Activated CD4-positive, alpha-beta memory T cell treated with anti-CD3 and anti-CD28 coated beads for 36 hours (primary cell): ENCODE measurements at regions of chr10 and their contacts with region 1.

Region 1: GRCh38 chr10:88064608-88065382 is 201.4 kb downstream of the PTEN start:
- DNase-seq: peak; percentile 51
- H3K4me3 Mint-ChIP-seq: no peak overlapping the region
- H3K27ac Mint-ChIP-seq: peak overlapping the region; percentile 9
- H3K4me1 Mint-ChIP-seq: peaks cover 49% of the 10 kb centered on the region
- H3K27me3 Mint-ChIP-seq: peaks cover 14% of the 10 kb centered on the region

Region 2: GRCh38 chr10:88114368-88114767 is 49.6 kb after region 1 on chr10:
- CTCF ChIA-PET with region 1: interaction called, 3 read pairs
- POLR2A ChIA-PET with region 1: interaction called, 5 read pairs
- intact Hi-C with region 1: loop called (anchors 1 kb)
- DNase-seq: peak; percentile 25
- H3K4me3 Mint-ChIP-seq: no peak overlapping the region
- H3K27ac Mint-ChIP-seq: no peak overlapping the region
- H3K4me1 Mint-ChIP-seq: peaks cover 6% of the 10 kb centered on the region
- H3K27me3 Mint-ChIP-seq: peaks cover 2% of the 10 kb centered on the region

Region 3: DNA sequence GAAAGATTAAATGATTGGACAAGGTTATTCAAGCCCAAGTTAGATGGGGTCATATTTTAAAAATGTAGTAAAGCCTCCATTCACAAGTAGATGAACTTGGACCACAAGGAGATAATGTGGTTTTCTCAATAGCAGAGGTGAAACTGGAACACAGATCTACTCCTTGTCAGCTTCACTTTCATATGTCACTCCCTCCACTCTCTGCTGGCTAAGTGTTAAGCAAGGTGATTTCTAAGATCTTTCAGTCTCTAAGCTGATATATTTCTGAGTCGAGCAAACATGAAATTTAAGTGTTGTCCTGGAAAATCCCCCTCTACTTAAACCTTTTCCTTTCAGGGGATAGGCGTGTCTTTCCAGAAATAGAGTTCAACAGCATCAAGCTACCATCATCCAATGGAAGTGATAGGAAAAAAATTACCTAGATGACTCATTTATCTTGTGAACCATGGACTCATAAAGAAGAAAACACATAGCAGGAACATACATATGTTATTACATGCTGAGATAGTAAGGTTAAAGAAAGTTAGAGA is 73.6 kb after region 1 on chr10:
- CTCF ChIA-PET with region 1: no interaction called
- POLR2A ChIA-PET with region 1: no interaction called
- intact Hi-C with region 1: loop called (anchors 1 kb)
- DNase-seq: no peak
- H3K4me3 Mint-ChIP-seq: no peak overlapping the region
- H3K27ac Mint-ChIP-seq: no peak overlapping the region
- H3K4me1 Mint-ChIP-seq: peaks cover 9% of the 10 kb centered on the region
- H3K27me3 Mint-ChIP-seq: no peaks in the 10 kb centered on the region

Region 4: GRCh38 chr10:88181902-88182600 is 117.3 kb after region 1 on chr10:
- CTCF ChIA-PET with region 1: no interaction called
- POLR2A ChIA-PET with region 1: no interaction called
- intact Hi-C with region 1: no loop called
- DNase-seq: no peak
- H3K4me3 Mint-ChIP-seq: no peak overlapping the region
- H3K27ac Mint-ChIP-seq: no peak overlapping the region
- H3K4me1 Mint-ChIP-seq: peaks cover 11% of the 10 kb centered on the region
- H3K27me3 Mint-ChIP-seq: no peaks in the 10 kb centered on the region